Dendritic cell treated with granulocyte-macrophage colony-stimulating factor and Interleukin-4, amounts not matched to agents 40 ng/mL and 50 ng/mL, for 4 days (primary cell): ENCODE measurements at regions of chrX and their contacts with region 1.

Region 1: GRCh38 chrX:86047174-86047935 is at the start of gene CHM:
- H3K4me3 Mint-ChIP-seq: no peak within 1 kb of the TSS
- H3K27ac Mint-ChIP-seq: no peak within 1 kb of the TSS
- H3K4me1 Mint-ChIP-seq: peaks cover 5% of the 10 kb centered on the region
- H3K27me3 Mint-ChIP-seq: peaks cover 8% of the 10 kb centered on the region

Region 2: GRCh38 chrX:85870585-85870984 is 176.8 kb before region 1 on chrX:
- intact Hi-C with region 1: loop called (anchors 10 kb)
- H3K4me3 Mint-ChIP-seq: no peak overlapping the region
- H3K27ac Mint-ChIP-seq: no peak overlapping the region
- H3K4me1 Mint-ChIP-seq: no peaks in the 10 kb centered on the region
- H3K27me3 Mint-ChIP-seq: no peaks in the 10 kb centered on the region

Region 3: DNA sequence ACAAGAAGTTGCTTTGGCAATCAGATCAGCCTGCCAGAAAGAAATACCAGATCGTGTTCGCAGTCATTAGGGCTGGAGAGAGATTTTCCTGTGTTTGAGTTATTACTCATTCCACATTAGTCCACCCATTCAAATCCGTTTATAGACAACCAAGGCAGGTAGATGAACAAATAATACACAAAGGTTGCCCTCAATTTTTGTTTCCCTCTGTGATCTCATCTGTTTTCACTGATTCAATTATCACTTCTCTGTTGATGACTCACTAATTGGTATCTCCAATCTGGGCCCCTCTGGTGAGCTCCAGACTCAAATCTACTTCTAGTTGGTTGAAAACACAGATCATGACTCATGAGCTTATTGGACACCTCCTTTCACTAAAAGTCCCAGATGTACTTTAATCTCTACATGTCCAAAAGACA is 54.5 kb before region 1 on chrX:
- intact Hi-C with region 1: no loop called
- H3K4me3 Mint-ChIP-seq: no peak overlapping the region
- H3K27ac Mint-ChIP-seq: no peak overlapping the region
- H3K4me1 Mint-ChIP-seq: peaks cover 21% of the 10 kb centered on the region
- H3K27me3 Mint-ChIP-seq: no peaks in the 10 kb centered on the region